Left colon (tissue), 2 donors: ENCODE measurements at regions of chr5 and their contacts with region 1.

Region 1: GRCh38 chr5:124649491-124650146 is 96.8 kb downstream of the ZNF608 start:
- DNase-seq: peak; percentile 84 to 87
- ATAC-seq: peak; percentile 74

Region 2: DNA sequence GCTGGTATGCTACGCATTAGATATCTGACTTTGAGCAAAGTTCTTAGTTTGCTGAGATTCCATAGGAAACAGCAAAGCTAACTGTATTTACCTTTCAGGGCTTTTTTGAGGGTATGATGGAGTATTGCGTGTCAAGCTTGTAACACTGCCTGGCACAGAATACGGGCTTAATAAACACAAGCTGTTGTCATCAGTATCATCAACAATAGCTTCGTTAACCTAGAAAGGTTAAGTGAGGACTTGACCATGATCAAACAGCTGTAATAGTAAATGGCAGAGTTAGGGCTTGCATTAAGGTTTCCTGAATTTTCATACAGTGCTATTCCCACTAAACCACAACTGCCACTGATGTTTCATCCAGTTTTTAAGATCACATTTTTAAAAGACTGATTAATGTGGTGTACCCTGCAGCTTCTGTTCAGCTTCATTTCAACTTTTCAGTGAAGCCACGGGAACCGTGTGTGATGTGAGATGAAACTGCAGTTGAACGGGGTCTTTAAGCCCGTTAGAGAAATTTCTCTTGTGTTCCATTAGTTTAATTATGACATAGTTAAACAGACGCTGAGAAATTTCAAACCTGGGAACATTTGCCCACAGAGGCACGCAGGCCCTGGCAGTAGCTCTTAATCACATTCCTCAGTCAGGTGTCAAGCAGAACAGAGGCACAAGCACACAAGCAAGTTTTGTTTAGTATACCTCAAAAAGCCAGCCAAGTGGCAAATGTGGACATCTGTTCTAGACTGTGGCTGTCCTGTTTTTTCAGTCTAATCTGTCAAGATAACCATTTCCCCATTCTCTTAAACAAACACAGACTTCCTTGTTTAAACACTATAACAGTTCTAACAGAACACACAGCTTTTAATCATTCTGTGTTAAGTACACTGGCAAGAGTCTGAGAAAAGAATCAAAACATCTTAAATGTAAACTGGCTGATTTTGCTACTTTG is 50.3 kb before region 1 on chr5:
- intact Hi-C with region 1: no loop called
- DNase-seq: no peak
- ATAC-seq: peak; percentile 84

Region 3: DNA sequence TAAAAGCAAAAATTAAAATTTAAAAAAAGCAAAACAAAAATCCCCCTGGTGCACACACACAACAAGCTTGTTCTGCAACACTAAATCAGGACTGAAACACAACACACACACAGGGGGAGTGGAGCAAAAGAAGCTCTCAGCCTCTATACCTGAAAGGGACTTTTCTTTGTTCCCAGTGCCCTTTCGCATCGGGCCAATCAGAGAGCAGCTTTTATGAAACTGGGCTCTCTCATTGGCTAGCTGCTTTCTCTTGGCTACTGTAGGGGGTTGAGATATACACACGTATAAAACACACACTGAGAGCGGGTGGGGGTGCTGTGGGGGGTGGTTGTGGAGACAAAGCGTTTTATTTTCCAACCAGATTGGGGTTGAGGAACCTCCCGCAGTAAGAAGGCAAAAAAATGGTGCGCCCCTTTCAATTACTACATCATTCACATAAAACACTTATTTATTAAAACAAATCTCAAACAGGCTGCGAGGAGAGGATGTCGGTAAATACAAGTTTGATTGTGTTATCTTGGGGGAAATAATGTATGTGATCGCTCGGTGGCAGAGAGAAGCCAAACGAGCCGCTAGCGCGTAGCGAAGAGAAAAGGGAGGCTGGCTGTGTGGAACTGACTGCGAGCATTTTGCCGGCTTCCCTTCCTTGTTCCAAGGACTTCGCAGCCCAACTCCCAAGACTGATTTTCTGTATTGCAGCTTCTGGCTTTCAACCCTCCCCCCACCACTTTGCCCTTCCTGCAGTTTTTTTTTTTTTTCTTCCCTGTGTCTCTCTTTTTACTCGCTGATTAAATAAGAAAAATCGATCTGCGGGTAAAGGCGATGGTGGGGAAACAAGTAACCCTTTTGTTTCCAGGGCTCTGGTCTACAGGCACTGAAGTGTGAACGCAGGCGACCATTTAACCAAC is 99.3 kb after region 1 on chr5:
- intact Hi-C with region 1: loop called in 1 of 2 experiments (anchors 5 kb)
- DNase-seq: peak; percentile 77 to 89
- ATAC-seq: peak; percentile 80